MCF 10A (cell line): ENCODE measurements at regions of chr1 and their contacts with region 1.

Region 1: DNA sequence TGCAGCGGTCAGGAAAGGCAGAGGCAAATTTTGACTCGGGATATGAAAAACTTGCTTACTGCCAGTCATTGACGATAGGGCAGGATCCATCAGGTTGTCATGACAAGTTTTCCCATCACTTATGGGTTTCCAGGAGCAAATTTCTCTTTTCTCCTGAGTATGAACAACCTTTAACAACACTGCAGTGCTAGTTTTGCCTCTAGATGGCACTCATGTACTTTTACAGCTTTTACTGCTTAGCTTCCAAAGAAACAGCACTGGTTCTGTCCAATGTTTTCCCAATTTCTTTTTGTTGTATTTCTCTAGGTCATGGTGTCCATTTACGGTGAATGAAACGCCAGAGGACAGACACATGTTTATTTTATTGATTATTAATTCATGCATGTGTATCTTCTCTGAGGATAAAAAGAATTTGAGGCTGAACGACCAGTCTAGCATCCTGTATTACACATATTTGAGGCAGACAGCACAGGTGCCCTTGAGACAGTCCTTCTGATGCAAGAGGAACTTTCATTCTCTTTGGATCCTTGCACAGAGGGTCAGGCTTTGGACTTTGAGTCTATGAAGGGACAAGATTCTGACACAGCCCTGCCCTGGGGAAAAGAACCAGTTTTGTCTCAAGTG is 112.3 kb upstream of the TRABD2B start:
- DNase-seq: peak; percentile 74
- H3K4me3 Mint-ChIP-seq: no peak overlapping the region
- H3K27ac Mint-ChIP-seq: no peak overlapping the region
- H3K4me1 Mint-ChIP-seq: peaks cover 42% of the 10 kb centered on the region
- H3K27me3 Mint-ChIP-seq: no peaks in the 10 kb centered on the region
- CTCF ChIP-seq: peak; percentile 86

Region 2: GRCh38 chr1:47963568-47964358 is 145.7 kb before region 1 on chr1:
- CTCF ChIA-PET with region 1: no interaction called
- POLR2A ChIA-PET with region 1: no interaction called
- intact Hi-C with region 1: no loop called
- DNase-seq: no peak
- H3K4me3 Mint-ChIP-seq: no peak overlapping the region
- H3K27ac Mint-ChIP-seq: peak overlapping the region; percentile 95
- H3K4me1 Mint-ChIP-seq: peaks cover 22% of the 10 kb centered on the region
- H3K27me3 Mint-ChIP-seq: no peaks in the 10 kb centered on the region
- CTCF ChIP-seq: no peak

Region 3: DNA sequence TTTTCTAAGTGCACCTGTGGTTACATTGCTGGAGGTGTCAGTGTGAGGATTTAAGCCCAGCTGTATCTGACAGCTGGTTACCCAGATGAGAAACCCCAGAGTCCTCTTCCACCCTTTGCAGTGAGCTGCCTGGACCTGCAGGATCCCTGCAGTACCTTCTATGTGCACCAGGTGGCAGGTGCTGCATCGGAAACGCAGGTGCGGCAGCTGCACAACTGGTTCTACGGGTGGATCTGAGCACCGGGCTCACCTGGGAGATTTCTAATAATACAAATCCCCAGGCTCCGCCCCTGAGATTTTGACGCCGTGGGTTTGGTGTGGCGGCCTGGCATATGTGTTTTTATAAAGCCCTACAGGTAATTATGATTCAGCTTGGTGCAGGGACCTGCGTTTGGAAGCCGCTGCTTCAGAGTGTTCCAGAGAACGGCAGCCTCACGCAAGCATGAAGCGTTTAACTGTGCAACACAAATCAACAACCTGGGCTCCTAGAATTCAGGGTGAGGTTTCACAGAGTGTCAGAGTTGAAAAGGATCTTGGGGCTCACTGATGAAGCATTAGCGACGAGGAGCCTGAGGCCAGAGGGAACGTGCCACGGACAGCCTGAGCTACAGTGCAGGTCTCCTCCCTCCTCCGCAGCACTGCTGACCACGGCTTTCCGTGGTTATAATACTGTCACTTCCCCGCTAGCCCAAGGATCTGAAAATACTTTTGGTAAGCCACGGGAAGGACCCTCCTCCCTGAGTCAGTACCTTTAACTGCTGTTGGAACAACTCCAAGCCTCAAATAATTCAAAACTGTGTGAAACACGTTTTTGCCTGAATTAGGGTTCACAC is 15.6 kb before region 1 on chr1:
- CTCF ChIA-PET with region 1: interaction called, 15 read pairs
- POLR2A ChIA-PET with region 1: interaction called, 3 read pairs
- intact Hi-C with region 1: no loop called
- DNase-seq: peak; percentile 79
- H3K4me3 Mint-ChIP-seq: peak overlapping the region; percentile 73
- H3K27ac Mint-ChIP-seq: no peak overlapping the region
- H3K4me1 Mint-ChIP-seq: peaks cover 18% of the 10 kb centered on the region
- H3K27me3 Mint-ChIP-seq: peaks cover 67% of the 10 kb centered on the region
- CTCF ChIP-seq: peak; percentile 79

Region 4: DNA sequence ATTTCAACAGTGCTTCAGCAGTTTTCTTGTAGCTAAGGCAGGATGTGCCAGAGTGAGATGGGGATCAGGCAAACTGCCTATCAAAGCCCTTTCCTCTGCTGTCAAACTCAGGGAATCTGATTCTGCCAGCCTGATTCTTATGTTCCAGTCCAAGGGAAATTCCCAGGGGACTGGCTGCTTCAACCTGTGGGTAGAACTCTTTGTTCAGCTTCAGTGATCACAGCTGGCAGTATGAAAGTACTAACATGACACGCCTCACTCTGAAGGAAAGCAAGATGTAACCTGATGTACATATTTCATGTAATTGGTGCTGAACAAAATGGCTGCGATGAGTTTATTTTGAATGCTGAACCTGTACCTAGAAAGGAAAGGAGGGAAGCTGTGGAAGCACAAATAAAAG is 72.9 kb after region 1 on chr1:
- CTCF ChIA-PET with region 1: interaction called, 11 read pairs
- POLR2A ChIA-PET with region 1: interaction called, 4 read pairs
- intact Hi-C with region 1: no loop called
- DNase-seq: peak; percentile 67
- H3K4me3 Mint-ChIP-seq: peak overlapping the region; percentile 66
- H3K27ac Mint-ChIP-seq: peak overlapping the region; percentile 88
- H3K4me1 Mint-ChIP-seq: peaks cover 48% of the 10 kb centered on the region
- H3K27me3 Mint-ChIP-seq: no peaks in the 10 kb centered on the region
- CTCF ChIP-seq: no peak

Region 5: GRCh38 chr1:48202030-48202752 is 92.7 kb after region 1 on chr1:
- CTCF ChIA-PET with region 1: interaction called, 198 read pairs
- POLR2A ChIA-PET with region 1: interaction called, 27 read pairs
- intact Hi-C with region 1: loop called (anchors 1 kb)
- DNase-seq: peak; percentile 85
- H3K4me3 Mint-ChIP-seq: peak overlapping the region; percentile 25
- H3K27ac Mint-ChIP-seq: peak overlapping the region; percentile 78
- H3K4me1 Mint-ChIP-seq: peaks cover 54% of the 10 kb centered on the region
- H3K27me3 Mint-ChIP-seq: no peaks in the 10 kb centered on the region
- CTCF ChIP-seq: peak; percentile 75

Region 6: GRCh38 chr1:48236716-48237470 is 127.4 kb after region 1 on chr1:
- CTCF ChIA-PET with region 1: interaction called, 85 read pairs
- POLR2A ChIA-PET with region 1: interaction called, 3 read pairs
- intact Hi-C with region 1: loop called (anchors 1 kb)
- DNase-seq: peak; percentile 43
- H3K4me3 Mint-ChIP-seq: no peak overlapping the region
- H3K27ac Mint-ChIP-seq: no peak overlapping the region
- H3K4me1 Mint-ChIP-seq: no peaks in the 10 kb centered on the region
- H3K27me3 Mint-ChIP-seq: no peaks in the 10 kb centered on the region
- CTCF ChIP-seq: peak; percentile 74

Region 7: DNA sequence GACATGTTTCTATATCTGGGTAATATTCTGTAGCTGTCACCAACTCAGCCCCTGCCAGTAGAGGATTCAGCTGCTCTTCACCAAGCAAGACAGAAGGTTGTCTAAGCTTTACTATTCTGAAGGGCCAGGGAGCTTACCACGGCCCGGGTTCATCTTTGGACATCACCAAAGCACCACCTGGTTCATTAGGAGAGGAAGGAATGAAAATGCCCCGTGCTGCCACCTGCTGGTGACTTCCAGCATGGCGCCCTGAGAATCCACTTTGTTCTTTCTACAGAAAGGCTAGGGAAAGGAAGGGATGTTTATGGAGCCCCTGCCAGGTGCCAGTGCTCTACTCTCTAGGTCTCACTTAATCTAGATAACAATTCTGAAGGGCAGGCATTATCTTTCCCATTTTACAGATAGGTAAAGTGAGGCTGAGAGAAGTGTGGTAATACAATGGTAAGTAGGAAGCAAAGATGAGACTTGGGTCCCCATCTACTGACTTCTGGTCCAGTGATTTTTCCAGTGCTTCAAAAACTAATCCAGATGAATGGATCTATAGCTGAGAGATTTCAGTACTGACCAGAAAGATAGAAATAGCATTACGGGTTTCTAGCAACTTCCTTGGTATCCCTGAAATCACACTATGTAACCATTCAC is 587.7 kb after region 1 on chr1:
- CTCF ChIA-PET with region 1: no interaction called
- POLR2A ChIA-PET with region 1: no interaction called
- intact Hi-C with region 1: loop called (anchors 10 kb)
- DNase-seq: peak; percentile 68
- H3K4me3 Mint-ChIP-seq: no peak overlapping the region
- H3K27ac Mint-ChIP-seq: no peak overlapping the region
- H3K4me1 Mint-ChIP-seq: peaks cover 10% of the 10 kb centered on the region
- H3K27me3 Mint-ChIP-seq: peaks cover 16% of the 10 kb centered on the region
- CTCF ChIP-seq: peak; percentile 81